ENCODE measurements at regions of chr13 and their contacts with region 1.

Region 1: DNA sequence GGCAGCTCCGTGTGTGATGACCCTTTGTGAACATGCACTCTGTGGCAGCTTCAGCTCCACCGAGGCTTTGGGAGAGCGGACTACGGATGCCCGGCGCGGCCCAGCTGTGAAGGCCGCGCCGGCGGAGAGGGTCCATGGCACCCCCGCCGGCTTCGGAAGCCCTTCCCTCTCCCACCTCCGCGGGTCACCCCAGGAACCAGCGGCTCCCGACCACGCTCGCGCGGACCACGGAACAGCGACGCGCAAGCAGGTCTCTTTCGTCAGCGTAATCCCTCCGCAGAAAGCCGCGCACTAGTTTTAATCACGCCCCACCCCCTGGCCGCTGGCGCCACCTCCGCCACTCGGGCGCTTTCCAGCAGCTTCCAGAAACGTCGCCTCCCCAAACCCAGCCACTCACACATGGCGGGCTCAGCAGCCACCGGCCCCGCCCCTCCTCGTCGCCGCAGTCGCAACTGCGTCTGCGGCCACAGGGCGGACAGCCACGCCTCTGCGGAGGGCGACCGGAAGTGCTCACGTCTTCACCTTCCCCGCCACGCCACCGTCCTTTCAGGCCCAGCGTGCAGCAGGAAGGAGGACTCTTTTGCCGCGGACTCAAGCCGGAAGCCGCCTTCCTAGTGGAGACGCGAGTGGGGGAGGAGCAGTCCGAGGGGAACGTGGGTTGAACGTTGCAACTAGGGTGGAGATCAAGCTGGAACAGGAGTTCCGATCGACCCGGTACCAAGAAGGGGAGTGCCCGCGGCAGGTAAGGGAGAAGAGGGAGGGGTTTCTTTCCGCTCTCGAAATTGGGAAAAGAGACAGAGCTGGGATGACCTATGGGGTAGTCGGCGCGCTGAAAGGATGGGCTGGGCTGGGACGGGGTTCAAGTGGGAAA is at the start of gene USPL1:
- DNase-seq: peak; percentile 99
- H3K4me3 Mint-ChIP-seq: no peak within 1 kb of the TSS
- H3K27ac Mint-ChIP-seq: no peak within 1 kb of the TSS
- H3K4me1 Mint-ChIP-seq: peaks cover 26% of the 10 kb centered on the region
- H3K27me3 Mint-ChIP-seq: no peaks in the 10 kb centered on the region
- total RNA-seq, gene USPL1: 13.3 to 13.8 TPM

Region 2: GRCh38 chr13:29595380-29596063 is 1022.0 kb before region 1 on chr13 and contains the start of gene SLC7A1:
- CTCF ChIA-PET with region 1: no interaction called
- POLR2A ChIA-PET with region 1: no interaction called
- intact Hi-C with region 1: loop called (anchors 2 kb)
- DNase-seq: peak; percentile 90
- H3K4me3 Mint-ChIP-seq: peak within 1 kb of the TSS; percentile 89
- H3K27ac Mint-ChIP-seq: peak within 1 kb of the TSS; percentile 97
- H3K4me1 Mint-ChIP-seq: peaks cover 45% of the 10 kb centered on the region
- H3K27me3 Mint-ChIP-seq: peaks cover 1% of the 10 kb centered on the region
- total RNA-seq, gene SLC7A1: 106 to 114 TPM

Region 3: GRCh38 chr13:30306762-30307193 is 310.8 kb before region 1 on chr13:
- CTCF ChIA-PET with region 1: no interaction called
- POLR2A ChIA-PET with region 1: interaction called, 3 read pairs
- intact Hi-C with region 1: loop called (anchors 2 kb)
- DNase-seq: peak; percentile 94
- H3K4me3 Mint-ChIP-seq: peak overlapping the region; percentile 84
- H3K27ac Mint-ChIP-seq: peak overlapping the region; percentile 87
- H3K4me1 Mint-ChIP-seq: peaks cover 49% of the 10 kb centered on the region
- H3K27me3 Mint-ChIP-seq: no peaks in the 10 kb centered on the region

Region 4: DNA sequence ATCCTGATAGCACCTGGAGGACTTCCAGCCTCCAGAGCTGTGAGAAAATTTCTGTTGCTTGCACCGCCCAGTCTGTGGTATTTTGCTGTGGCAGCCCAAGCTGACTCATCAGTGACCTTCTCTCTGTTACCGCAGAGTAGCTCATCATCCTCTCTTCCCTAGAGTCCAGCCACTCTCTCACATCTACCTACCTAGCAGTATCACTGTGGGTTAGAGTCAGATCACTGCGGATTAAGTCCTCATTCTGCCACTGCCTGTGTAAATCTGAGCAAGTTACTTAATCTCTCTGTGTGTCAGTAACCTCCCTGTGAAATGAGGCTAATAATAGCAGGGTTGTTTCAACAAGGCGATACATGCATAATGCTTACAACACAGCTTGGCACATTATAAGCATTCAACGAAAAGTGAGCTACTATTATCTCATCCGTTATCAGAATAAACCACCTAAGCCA is 40.1 kb before region 1 on chr13:
- CTCF ChIA-PET with region 1: no interaction called
- POLR2A ChIA-PET with region 1: interaction called, 3 read pairs
- intact Hi-C with region 1: loop called (anchors 2 kb)
- DNase-seq: peak; percentile 80
- H3K4me3 Mint-ChIP-seq: no peak overlapping the region
- H3K27ac Mint-ChIP-seq: peak overlapping the region; percentile 11
- H3K4me1 Mint-ChIP-seq: peaks cover 23% of the 10 kb centered on the region
- H3K27me3 Mint-ChIP-seq: peaks cover 1% of the 10 kb centered on the region

Region 5: DNA sequence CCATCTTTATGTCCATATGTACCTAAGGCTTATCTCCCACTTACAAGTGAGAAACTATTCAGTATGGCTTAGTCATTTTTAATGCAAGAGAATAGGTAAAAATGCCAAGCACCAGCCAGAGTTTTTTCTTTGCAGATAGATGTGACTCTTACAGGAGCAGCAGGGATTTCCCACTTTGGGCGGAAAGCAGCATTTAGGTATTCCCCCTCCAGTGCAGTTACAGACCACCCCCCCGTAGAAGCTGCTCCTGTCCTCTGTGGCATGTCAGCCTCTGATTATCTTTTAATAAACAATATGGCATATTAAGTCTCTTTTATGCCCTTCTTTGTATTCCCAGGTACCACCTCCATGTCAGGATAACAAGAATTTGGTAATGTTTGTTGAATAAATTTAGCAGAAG is 24.5 kb before region 1 on chr13:
- CTCF ChIA-PET with region 1: no interaction called
- POLR2A ChIA-PET with region 1: no interaction called
- intact Hi-C with region 1: no loop called
- DNase-seq: no peak
- H3K4me3 Mint-ChIP-seq: no peak overlapping the region
- H3K27ac Mint-ChIP-seq: no peak overlapping the region
- H3K4me1 Mint-ChIP-seq: no peaks in the 10 kb centered on the region
- H3K27me3 Mint-ChIP-seq: no peaks in the 10 kb centered on the region

Region 6: DNA sequence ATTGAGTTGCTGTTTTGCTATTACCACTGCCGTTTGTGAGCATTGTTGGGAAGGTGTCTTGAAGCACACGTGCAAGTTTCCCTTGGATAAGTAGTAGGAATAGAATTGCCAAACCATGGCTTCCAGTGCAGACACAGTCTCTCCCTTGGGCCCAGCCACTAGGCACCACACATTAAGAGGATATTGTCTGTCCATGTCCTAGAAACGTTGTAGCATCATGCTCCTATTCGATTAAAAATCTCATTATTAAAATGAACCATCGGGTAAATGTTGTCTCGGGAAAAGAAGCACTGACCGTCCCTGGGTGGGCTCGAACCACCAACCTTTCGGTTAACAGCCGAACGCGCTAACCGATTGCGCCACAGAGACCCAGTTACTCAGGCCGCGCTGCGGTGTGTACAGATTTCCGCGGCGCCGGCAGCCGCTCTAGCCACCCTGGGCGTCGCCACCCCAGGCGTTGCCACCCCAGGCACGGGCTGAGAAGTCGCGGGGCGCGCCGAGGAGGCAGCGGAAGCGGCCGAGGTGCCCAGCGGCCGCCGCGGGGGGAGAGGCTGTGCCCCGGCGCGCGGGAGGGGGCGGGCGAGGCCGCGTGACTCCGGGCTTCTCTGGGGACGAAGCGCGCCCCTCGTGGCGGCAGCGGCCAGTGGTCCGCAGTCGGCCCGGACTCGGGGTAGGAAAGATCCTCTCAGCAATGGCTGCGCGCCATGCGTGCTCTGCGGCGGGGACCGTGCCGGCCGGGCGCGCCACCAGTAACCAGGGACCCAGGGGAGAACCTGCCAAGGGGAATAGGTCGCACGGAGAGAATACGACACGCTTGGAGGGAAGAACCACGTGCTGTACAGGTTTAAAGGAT is 56.3 kb after region 1 on chr13:
- CTCF ChIA-PET with region 1: no interaction called
- POLR2A ChIA-PET with region 1: no interaction called
- intact Hi-C with region 1: loop called (anchors 5 kb)
- DNase-seq: peak; percentile 92
- H3K4me3 Mint-ChIP-seq: peak overlapping the region; percentile 81
- H3K27ac Mint-ChIP-seq: peak overlapping the region; percentile 76
- H3K4me1 Mint-ChIP-seq: peaks cover 13% of the 10 kb centered on the region
- H3K27me3 Mint-ChIP-seq: peaks cover 2% of the 10 kb centered on the region

Region 7: DNA sequence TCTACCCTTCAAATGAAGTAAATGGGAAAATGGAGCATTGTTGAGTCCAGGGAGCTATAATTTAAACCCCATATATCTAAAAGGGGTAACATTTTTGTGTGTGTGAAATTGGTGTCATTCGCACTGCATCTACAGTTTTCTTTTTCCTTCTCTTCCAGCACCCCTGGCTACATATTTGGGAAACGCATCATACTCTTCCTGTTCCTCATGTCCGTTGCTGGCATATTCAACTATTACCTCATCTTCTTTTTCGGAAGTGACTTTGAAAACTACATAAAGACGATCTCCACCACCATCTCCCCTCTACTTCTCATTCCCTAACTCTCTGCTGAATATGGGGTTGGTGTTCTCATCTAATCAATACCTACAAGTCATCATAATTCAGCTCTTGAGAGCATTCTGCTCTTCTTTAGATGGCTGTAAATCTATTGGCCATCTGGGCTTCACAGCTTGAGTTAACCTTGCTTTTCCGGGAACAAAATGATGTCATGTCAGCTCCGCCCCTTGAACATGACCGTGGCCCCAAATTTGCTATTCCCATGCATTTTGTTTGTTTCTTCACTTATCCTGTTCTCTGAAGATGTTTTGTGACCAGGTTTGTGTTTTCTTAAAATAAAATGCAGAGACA is 146.3 kb after region 1 on chr13:
- CTCF ChIA-PET with region 1: no interaction called
- POLR2A ChIA-PET with region 1: no interaction called
- intact Hi-C with region 1: no loop called
- DNase-seq: no peak
- H3K4me3 Mint-ChIP-seq: no peak overlapping the region
- H3K27ac Mint-ChIP-seq: no peak overlapping the region
- H3K4me1 Mint-ChIP-seq: peaks cover 11% of the 10 kb centered on the region
- H3K27me3 Mint-ChIP-seq: no peaks in the 10 kb centered on the region

Region 8: DNA sequence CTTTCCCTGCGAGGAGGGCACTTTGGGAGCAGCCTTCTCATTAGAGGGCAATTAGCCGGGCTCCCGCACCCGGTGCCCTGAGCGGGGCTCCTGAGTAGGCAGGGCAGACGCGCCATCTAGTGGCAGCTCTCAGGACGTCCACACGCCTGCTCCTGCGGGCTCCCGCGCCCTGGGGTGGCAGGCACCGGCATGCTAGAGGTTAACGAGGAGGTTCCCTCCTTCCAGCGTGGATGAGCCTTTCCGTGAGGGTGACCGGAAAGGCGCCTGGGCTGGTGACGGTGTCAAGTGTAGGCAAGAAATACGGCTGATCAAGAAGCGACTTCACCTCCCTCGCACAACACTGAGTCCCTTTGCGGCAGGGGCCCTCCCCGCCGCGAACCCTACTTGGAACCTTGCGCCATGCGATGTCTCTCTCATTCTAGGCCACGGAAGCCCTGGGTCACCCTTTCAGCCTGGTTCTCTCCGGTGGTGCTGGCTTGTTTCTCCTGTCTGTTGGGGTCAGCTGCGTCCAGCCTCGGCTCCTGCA is 185.5 kb after region 1 on chr13:
- CTCF ChIA-PET with region 1: interaction called, 12 read pairs
- POLR2A ChIA-PET with region 1: interaction called, 4 read pairs
- intact Hi-C with region 1: no loop called
- DNase-seq: peak; percentile 89
- H3K4me3 Mint-ChIP-seq: no peak overlapping the region
- H3K27ac Mint-ChIP-seq: no peak overlapping the region
- H3K4me1 Mint-ChIP-seq: peaks cover 14% of the 10 kb centered on the region
- H3K27me3 Mint-ChIP-seq: no peaks in the 10 kb centered on the region

Region 9: DNA sequence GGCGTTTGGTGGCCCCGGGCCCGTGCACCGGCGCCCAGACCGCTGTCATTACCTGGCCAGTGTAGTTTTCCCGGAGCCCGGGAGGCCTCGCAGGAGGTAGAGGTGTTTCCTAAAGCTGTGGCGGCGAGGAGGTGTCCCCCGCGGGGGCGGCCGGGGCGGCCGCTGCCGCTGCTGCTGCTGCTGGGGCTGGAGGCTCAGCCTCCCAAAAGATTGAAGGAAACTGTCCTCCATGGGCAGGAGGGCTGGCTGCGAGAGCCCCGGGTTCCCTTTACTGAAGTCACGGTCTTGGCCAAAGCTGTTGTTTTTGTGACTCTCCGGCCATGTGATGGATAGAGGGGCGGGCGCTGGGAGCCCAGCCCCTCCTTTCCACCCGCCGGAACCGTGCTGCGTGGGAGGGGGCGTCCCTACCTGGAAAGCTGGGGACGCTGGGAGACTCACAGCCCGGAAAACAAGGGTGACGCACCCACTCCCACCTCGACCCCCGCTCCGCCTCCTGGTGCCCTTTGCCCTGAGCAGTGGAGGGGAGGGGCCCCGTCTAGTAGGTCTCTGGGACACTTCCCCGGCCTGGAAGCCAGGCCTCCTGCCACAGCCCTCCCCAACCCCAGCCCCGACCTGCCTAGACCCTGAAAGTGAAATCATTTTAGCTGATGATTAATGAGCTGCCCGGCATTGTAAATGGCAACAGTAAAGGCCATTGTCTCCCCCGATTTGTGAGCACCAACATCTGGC is 1810.5 kb after region 1 on chr13 and contains the start of gene N4BP2L1:
- CTCF ChIA-PET with region 1: no interaction called
- POLR2A ChIA-PET with region 1: no interaction called
- intact Hi-C with region 1: loop called (anchors 5 kb)
- DNase-seq: peak; percentile 94
- H3K4me3 Mint-ChIP-seq: peak within 1 kb of the TSS; percentile 88
- H3K27ac Mint-ChIP-seq: peak within 1 kb of the TSS; percentile 96
- H3K4me1 Mint-ChIP-seq: peaks cover 38% of the 10 kb centered on the region
- H3K27me3 Mint-ChIP-seq: no peaks in the 10 kb centered on the region
- total RNA-seq, gene N4BP2L1: 22.1 to 24.0 TPM

Measured in activated CD4-positive, alpha-beta memory T cell treated with anti-CD3 and anti-CD28 coated beads for 36 hours (primary cell).